ENCODE measurements at regions of chr1 and their contacts with region 1.

Region 1: DNA sequence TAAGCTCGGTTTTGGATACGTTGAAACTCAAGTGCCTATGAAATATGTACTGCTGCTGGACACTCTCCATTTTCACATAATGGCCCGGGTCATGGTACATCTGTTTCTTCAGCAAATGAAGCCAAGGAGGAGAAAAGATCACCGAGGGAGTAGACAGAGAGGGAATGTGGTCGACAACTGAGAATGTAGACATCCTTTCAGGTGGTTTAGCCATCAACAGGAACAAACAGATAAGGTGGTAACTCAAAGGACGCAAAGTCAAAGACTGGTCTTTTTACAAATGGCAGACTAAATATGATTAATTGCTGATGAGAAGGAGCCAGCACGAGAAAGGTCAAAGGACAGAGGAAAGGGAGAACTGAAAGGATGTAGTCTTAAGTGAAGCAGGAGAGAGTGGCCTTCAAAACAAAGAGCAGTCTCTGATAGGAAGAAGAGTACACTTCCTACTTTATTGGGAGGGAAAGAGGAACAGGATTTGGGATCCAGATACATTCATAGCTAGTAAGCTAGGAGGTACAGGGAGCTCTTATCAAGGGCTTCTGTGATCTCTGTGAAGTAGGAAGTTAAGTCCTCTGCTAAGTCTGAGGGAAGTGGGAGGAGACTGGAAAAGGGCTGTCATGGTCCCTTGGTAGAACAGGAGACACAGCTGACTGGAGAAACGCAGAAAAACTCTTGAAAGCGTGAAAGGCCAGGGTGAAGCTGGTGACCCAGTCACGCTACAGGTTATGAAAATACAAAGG is 28.3 kb downstream of the NUP133 start:
- DNase-seq: no peak
- H3K4me3 ChIP-seq: no peak overlapping the region
- H3K27ac ChIP-seq: no peak overlapping the region
- H3K4me1 ChIP-seq: no peaks in the 10 kb centered on the region
- H3K27me3 ChIP-seq: no peaks in the 10 kb centered on the region
- CTCF ChIP-seq: no peak
- POLR2A ChIP-seq: no peak

Region 2: GRCh38 chr1:229258031-229258756 is 221.6 kb before region 1 on chr1:
- intact Hi-C with region 1: loop called (anchors 5 kb)
- DNase-seq: peak; percentile 63 to 85 (median 65)
- H3K4me3 ChIP-seq: no peak overlapping the region
- H3K27ac ChIP-seq: no peak overlapping the region
- H3K4me1 ChIP-seq: peaks cover 0 to 4% of the 10 kb centered on the region in 2 donors
- H3K27me3 ChIP-seq: no peaks in the 10 kb centered on the region
- CTCF ChIP-seq: peak; percentile 66 to 94 (median 84)
- POLR2A ChIP-seq: no peak